Left cardiac atrium (tissue), 4 donors: ENCODE measurements at regions of chr2 and their contacts with region 1.

Region 1: GRCh38 chr2:72378753-72379382 is 231.2 kb upstream of the CYP26B1 start:
- DNase-seq: no peak
- ATAC-seq: no peak

Region 2: DNA sequence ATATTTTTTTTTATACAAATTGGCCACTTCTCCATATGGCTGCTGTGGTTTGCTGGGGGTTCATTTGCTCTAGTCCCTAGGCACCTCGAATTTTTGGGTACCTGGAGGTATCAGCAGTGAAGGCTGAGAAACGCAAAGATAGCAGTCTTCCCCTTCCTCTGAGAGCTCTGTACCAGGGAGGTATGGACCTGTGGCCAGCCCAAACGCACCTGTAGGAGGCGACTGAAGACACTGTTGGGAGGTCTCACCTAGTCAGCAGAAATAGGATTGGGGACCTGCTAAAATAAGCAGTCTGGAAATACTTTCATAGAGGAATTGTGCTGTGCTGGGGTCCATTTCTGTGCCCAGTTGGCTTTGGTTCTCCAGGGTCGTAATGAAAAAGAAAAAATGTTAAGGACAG is 61.0 kb after region 1 on chr2:
- intact Hi-C with region 1: loop called in 1 of 2 experiments (anchors 10 kb)
- DNase-seq: no peak
- ATAC-seq: no peak